ENCODE measurements at regions of chr22 and their contacts with region 1.

Region 1: GRCh38 chr22:32796865-32797573 is 4.5 kb upstream of the TIMP3 start:
- DNase-seq: peak; percentile 64 to 72 (median 70)
- ATAC-seq: peak; percentile 82
- H3K4me3 ChIP-seq: no peak overlapping the region
- H3K4me1 ChIP-seq: peaks cover 10% of the 10 kb centered on the region
- CTCF ChIP-seq: peak; percentile 70

Region 2: GRCh38 chr22:32528984-32529982 is 267.7 kb before region 1 on chr22:
- intact Hi-C with region 1: loop called (anchors 5 to 10 kb)
- DNase-seq: peak; percentile 82 to 91 (median 82)
- ATAC-seq: peak; percentile 84
- H3K4me3 ChIP-seq: no peak overlapping the region
- H3K4me1 ChIP-seq: peaks cover 14% of the 10 kb centered on the region
- CTCF ChIP-seq: peak; percentile 61

Region 3: DNA sequence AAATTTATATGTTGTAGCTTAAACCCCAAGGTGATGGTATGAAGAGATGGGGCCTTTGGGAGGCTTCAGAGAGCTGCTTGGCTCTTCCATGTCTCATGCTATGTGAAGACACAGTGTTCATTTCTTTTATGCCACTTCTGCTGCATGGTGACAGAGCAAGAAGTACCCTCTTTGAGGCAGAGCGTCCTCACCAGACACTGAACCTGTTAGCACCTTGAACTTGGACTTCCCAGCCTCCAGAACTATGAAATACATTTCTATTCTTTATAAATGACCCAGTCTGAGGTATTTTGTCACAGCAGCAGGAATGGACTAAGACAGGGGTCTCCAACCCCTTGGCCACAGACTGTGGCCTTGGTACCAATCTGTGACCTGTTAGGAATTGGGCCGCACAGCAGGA is 142.0 kb before region 1 on chr22:
- intact Hi-C with region 1: loop called (anchors 5 kb)
- DNase-seq: no peak
- ATAC-seq: no peak
- H3K4me3 ChIP-seq: no peak overlapping the region
- H3K4me1 ChIP-seq: no peaks in the 10 kb centered on the region
- CTCF ChIP-seq: no peak

Region 4: GRCh38 chr22:32660292-32660691 is 136.7 kb before region 1 on chr22:
- intact Hi-C with region 1: loop called (anchors 5 kb)
- DNase-seq: peak in 2 of 3 donors; percentile 76 to 81
- ATAC-seq: peak; percentile 82
- H3K4me3 ChIP-seq: no peak overlapping the region
- H3K4me1 ChIP-seq: no peaks in the 10 kb centered on the region
- CTCF ChIP-seq: peak; percentile 42

Region 5: DNA sequence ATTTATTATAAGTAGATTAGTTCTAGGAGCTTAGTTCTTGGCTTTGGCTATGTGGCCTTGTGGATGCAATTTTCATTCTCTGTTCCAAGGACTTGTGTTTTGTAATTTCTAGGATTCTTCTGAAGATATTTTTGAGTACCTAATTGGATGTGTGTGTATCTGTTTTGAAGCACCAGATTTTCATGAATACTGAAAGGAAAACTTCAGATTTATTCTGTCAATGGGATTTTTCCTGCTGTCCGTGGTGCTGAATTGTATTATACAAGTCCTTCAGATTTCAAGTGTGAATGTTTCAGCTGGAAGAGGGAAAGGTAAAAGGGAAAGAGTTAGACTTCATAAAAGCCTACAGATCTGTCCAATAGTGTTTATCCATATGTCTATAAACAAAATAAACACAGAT is 279.3 kb after region 1 on chr22:
- intact Hi-C with region 1: no loop called
- DNase-seq: no peak
- ATAC-seq: no peak
- H3K4me3 ChIP-seq: no peak overlapping the region
- H3K4me1 ChIP-seq: no peaks in the 10 kb centered on the region
- CTCF ChIP-seq: no peak